Posterior cingulate gyrus (tissue), 11 donors: ENCODE measurements at regions of chr15 and their contacts with region 1.

Region 1: DNA sequence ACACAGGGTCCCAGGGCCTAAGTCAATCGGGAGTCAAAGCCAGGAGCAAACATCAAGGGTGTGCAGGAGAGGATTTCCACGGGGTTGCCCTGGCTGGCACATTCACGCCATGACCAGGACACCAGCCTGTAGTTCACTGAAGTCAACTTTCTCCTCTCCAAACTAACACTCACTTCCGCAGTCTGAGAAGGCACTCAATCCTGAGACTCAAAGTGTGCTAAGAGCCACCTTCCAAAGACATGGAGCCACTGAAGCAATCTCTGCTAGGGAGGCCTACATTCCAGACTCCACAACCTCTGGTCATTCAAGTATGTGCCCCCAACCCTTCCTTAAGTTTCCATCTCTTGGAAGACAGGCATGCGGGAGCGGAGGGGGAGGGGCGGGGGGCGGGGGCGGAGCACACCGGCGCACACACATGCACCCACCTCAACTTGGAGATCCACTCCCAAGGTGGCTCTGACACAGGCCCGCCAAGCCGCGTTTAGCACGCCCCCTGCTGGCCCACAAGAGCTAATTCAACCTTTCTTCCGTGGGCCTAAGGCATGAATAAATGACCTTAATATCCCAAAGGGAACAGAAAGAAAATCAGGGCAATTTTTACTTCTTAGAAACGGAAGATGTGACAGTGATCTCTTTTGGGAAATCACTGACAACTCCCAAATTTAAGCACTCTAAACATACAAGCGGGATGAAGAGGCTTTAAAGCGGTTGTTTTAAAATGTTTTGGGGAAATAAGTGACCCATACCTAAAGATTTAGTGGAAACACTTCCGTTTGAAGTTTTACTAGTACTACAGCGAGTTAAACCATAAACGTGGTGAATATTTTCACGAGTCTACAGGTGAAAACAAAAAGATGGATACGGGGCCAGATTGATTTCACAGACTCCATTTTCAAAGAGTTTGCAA is 162.5 kb upstream of the CHRNA7 start:
- DNase-seq: peak; percentile 43 to 97 (median 72)

Region 2: GRCh38 chr15:31740203-31740602 is 127.6 kb before region 1 on chr15:
- intact Hi-C with region 1: loop called (anchors 5 kb)
- DNase-seq: peak in 9 of 10 donors; percentile 25 to 91 (median 67)

Region 3: GRCh38 chr15:32007355-32007960 is 139.7 kb after region 1 on chr15:
- intact Hi-C with region 1: no loop called
- DNase-seq: peak in 1 of 10 donors; percentile 7

Region 4: GRCh38 chr15:32743411-32744140 is 875.8 kb after region 1 on chr15:
- intact Hi-C with region 1: no loop called
- DNase-seq: no peak